ENCODE measurements at regions of chr12 and their contacts with region 1.

Region 1: GRCh38 chr12:122752464-122753318 is at the start of gene DENR:
- DNase-seq: peak; percentile 98
- H3K4me3 ChIP-seq: peak within 1 kb of the TSS; percentile 66 to 87 (median 77)
- H3K27ac ChIP-seq: peak within 1 kb of the TSS; percentile 74
- H3K4me1 ChIP-seq: peaks cover 11% of the 10 kb centered on the region
- H3K27me3 ChIP-seq: no peaks in the 10 kb centered on the region
- CTCF ChIP-seq: peak; percentile 87 to 90
- POLR2A ChIP-seq: peak; percentile 98
- total RNA-seq, gene DENR: 66.5 and 70.3 TPM in 2 replicates

Region 2: GRCh38 chr12:122225683-122226407 is 526.8 kb before region 1 on chr12 and contains the start of gene DIABLO:
- CTCF ChIA-PET with region 1: no interaction called
- POLR2A ChIA-PET with region 1: no interaction called
- dilution Hi-C with region 1: no loop called
- intact Hi-C with region 1: loop called (anchors 5 kb)
- DNase-seq: peak; percentile 100
- H3K4me3 ChIP-seq: peak within 1 kb of the TSS; percentile 71 to 100 (median 80)
- H3K27ac ChIP-seq: peak within 1 kb of the TSS; percentile 90
- H3K4me1 ChIP-seq: peaks cover 10% of the 10 kb centered on the region
- H3K27me3 ChIP-seq: no peaks in the 10 kb centered on the region
- CTCF ChIP-seq: no peak
- POLR2A ChIP-seq: peak; percentile 85
- total RNA-seq, gene DIABLO: 48.4 and 49.9 TPM in 2 replicates

Region 3: GRCh38 chr12:122526683-122527477 is 225.8 kb before region 1 on chr12 and contains the starts of genes KNTC1 and RSRC2:
- CTCF ChIA-PET with region 1: no interaction called
- POLR2A ChIA-PET with region 1: no interaction called
- dilution Hi-C with region 1: no loop called
- intact Hi-C with region 1: loop called (anchors 1 kb)
- DNase-seq: peak; percentile 100
- H3K4me3 ChIP-seq: peak within 1 kb of the TSS; percentile 87 to 100 (median 90)
- H3K27ac ChIP-seq: peak within 1 kb of the TSS; percentile 97
- H3K4me1 ChIP-seq: peaks cover 25% of the 10 kb centered on the region
- H3K27me3 ChIP-seq: no peaks in the 10 kb centered on the region
- CTCF ChIP-seq: no peak
- POLR2A ChIP-seq: peak; percentile 99
- total RNA-seq, gene KNTC1: 47.9 and 52.9 TPM in 2 replicates
- total RNA-seq, gene RSRC2: 78.0 and 81.1 TPM in 2 replicates

Region 4: DNA sequence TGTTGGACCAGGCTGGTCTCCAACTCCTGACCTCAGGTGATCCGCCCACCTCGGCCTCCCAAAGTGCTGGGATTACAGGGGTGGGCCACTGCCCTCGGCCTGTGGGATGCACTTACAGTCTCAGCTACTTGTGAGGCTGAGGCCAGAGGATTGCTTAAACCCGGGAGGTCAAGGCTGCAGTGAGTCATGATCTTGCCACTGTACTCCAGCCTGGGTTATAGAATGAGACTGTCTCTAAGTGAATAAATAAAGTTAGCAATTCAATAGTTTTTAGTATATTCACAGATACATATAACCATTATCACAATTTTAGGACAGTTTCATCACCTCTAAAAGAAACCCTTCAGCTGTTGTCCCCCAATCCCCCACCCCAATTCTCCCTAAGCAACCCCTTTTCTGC is 110.7 kb before region 1 on chr12:
- CTCF ChIA-PET with region 1: interaction called, 38 read pairs
- POLR2A ChIA-PET with region 1: no interaction called
- dilution Hi-C with region 1: no loop called
- intact Hi-C with region 1: loop called (anchors 1 kb)
- DNase-seq: no peak
- H3K4me3 ChIP-seq: no peak overlapping the region
- H3K27ac ChIP-seq: no peak overlapping the region
- H3K4me1 ChIP-seq: no peaks in the 10 kb centered on the region
- H3K27me3 ChIP-seq: no peaks in the 10 kb centered on the region
- CTCF ChIP-seq: no peak
- POLR2A ChIP-seq: no peak